ENCODE measurements at regions of chr7 and their contacts with region 1.

Region 1: DNA sequence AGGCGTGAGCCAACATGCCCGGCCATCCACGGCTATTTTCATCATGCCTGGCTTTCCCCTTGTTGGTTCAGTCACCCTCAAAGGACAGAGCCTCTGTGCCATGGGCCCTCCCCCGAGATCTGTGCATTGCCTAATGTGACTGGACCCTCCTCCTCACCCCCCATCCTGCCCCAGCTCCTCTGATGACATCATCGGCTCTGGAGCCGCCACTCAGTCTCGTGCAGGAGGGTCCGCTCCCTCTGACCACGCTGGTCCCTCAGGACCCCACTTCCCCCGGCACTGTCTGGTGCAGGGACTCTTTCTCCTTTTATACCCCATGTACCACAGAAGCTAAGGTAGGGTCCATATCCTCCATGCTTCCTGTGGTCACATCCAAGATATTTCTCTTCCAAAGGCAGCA is 33.2 kb upstream of the BAIAP2L1 start:
- DNase-seq: no peak
- CTCF ChIP-seq: no peak

Region 2: DNA sequence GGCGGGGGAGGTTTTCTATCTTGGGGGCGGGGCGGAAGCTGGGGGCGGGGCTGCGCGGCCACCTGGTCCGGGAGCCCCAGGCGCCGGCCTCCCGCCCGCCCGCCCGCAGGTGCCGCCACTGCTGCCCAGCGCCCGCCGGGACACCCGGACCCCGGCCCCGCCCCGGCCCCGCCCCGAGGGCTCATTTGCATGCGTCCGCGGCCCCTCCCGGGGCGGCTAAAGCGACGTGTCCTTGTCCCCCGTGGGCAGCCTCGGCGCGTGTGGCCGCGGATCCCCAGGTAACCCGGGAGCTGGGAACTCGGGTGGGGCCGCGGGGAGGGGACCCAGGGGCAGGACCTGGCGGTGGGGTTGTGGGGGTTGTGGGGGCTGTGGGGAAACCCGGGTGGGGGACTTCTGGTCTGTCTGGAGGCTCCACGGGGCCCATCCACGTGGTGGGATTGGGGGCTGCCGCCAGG is 222.8 kb before region 1 on chr7 and contains the start of gene BHLHA15:
- in situ Hi-C with region 1: no loop called
- DNase-seq: peak; percentile 77
- CTCF ChIP-seq: no peak

Region 3: DNA sequence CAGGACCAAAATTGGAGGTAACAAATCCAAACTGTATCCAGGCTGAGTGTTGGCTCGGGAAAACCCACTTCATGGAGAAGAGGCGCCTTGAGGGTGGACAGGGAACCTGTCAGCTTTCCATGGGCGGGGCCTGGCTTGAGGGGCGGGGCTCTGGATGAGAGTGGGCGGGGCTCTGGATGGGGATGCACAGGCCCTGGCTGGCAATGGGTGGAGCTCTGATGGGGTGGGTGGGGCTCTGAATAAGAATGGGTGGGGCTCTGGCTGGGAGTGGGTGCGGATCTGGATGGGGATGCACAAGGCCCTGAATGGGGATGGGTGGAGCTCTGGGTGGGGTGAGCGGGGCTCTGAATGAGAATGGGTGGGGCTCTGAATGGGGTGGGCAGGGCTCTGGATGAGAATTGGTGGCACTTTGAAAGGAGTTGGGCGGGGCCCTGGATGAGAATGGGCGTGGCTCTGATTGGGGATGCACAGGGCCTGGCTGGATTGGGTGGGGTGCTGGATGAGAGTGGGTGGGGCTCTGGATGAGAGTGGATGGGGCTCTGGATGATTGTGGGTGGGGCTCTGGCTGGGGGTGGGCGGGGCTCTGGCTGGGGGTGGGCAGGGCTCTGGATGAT is 86.4 kb after region 1 on chr7:
- in situ Hi-C with region 1: no loop called
- DNase-seq: no peak
- CTCF ChIP-seq: no peak

Region 4: DNA sequence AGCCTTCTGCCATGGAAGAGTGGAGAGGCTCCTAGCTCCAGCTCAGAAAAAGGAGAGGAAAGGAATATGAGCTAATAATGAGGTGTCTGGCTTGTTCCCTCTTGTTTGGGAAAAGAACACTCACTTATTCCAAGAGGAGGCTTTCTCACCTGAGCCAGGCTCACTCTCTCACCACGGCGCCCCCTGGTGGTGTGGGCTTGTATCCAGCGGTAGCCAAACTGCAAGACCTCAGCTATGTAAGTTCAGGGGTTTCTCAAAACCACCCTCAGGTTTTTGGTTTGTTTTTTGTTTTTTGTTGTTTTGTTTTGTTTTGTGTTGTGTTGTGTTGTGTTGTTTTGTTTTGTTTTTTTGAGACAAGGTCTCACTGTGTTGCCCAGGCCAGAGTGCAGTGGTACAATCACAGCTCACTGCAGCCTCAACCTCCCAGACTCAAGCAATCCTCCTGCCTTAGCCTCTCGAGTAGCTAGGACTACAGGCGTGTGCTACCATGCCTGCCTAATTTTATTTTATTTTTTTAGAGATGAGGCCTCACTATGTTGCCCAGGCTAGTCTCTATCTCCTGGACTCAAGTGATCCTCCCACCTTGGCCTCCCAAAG is 311.7 kb after region 1 on chr7:
- in situ Hi-C with region 1: loop called (anchors 10 kb)
- DNase-seq: peak; percentile 80
- CTCF ChIP-seq: peak; percentile 84